Tibial artery (tissue), 4 donors: ENCODE measurements at regions of chr1 and their contacts with region 1.

Region 1: GRCh38 chr1:222792744-222793143 is 22.1 kb upstream of the DISP1 start:
- DNase-seq: no peak
- H3K4me3 ChIP-seq: no peak overlapping the region
- H3K27ac ChIP-seq: no peak overlapping the region
- H3K4me1 ChIP-seq: no peaks in the 10 kb centered on the region
- H3K27me3 ChIP-seq: no peaks in the 10 kb centered on the region
- CTCF ChIP-seq: peak; percentile 52 to 72

Region 2: GRCh38 chr1:223081181-223081994 is 288.6 kb after region 1 on chr1:
- intact Hi-C with region 1: loop called (anchors 2 kb)
- DNase-seq: peak; percentile 56 to 90
- H3K4me3 ChIP-seq: peak overlapping the region; percentile 45 to 48
- H3K27ac ChIP-seq: peak overlapping the region; percentile 62 to 74
- H3K4me1 ChIP-seq: peaks cover 0 to 4% (median under 1%) of the 10 kb centered on the region in 4 donors
- H3K27me3 ChIP-seq: no peaks in the 10 kb centered on the region
- CTCF ChIP-seq: peak; percentile 97 to 98